ENCODE measurements at regions of chr19 and their contacts with region 1.

Region 1: GRCh38 chr19:38743394-38744295 is 629 bp downstream of the CAPN12 start:
- DNase-seq: no peak
- H3K4me3 ChIP-seq: no peak overlapping the region
- H3K27ac ChIP-seq: no peak overlapping the region
- H3K4me1 ChIP-seq: no peaks in the 10 kb centered on the region
- H3K27me3 ChIP-seq: no peaks in the 10 kb centered on the region
- CTCF ChIP-seq: no peak

Region 2: GRCh38 chr19:38718747-38719543 is 24.7 kb before region 1 on chr19:
- CTCF ChIA-PET with region 1: no interaction called
- POLR2A ChIA-PET with region 1: no interaction called
- intact Hi-C with region 1: no loop called
- DNase-seq: peak; percentile 56 to 93
- H3K4me3 ChIP-seq: no peak overlapping the region
- H3K27ac ChIP-seq: peak overlapping the region; percentile 80
- H3K4me1 ChIP-seq: peaks cover 11% of the 10 kb centered on the region
- H3K27me3 ChIP-seq: no peaks in the 10 kb centered on the region
- CTCF ChIP-seq: no peak; the same call in 1 of the 2 replicates

Region 3: DNA sequence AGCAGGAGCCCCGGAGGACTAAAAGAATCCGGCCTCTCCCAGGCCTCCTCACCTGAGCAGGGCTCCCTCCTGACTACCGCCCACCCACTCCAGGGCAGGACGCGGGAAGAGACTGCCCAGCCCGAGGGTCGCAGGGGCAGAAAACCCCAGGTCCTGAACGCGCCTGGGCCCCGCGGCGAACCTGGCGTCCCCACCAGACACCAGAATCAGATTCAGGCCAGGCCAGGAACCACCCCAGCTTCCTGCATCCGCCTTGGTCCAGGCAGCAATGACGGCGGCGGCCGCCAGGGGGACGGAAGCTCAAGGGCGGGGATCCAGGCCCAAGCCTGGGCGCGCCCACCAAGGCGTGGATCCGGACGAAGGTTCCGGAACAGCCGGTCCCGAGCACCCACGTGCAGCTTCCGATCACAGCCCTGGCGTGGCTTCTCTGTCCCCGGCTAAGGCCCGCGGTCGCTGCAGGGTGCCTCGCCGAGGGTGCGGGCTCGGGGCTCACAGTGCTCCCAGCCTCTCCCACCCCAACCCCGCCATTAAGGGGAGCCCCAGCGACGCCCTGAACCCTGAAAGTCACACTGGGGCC is 26.1 kb after region 1 on chr19:
- CTCF ChIA-PET with region 1: interaction called, 13 read pairs
- POLR2A ChIA-PET with region 1: no interaction called
- intact Hi-C with region 1: no loop called
- DNase-seq: peak in 1 of 2 experiments; percentile 69
- H3K4me3 ChIP-seq: no peak overlapping the region
- H3K27ac ChIP-seq: no peak overlapping the region
- H3K4me1 ChIP-seq: no peaks in the 10 kb centered on the region
- H3K27me3 ChIP-seq: no peaks in the 10 kb centered on the region
- CTCF ChIP-seq: peak; percentile 80

Region 4: GRCh38 chr19:38793203-38793602 is 49.6 kb after region 1 on chr19:
- CTCF ChIA-PET with region 1: no interaction called
- POLR2A ChIA-PET with region 1: interaction called, 10 read pairs
- intact Hi-C with region 1: no loop called
- DNase-seq: peak; percentile 41 to 48
- H3K4me3 ChIP-seq: no peak overlapping the region
- H3K27ac ChIP-seq: peak overlapping the region; percentile 38; the same call in 1 of the 2 replicates
- H3K4me1 ChIP-seq: peaks cover 12% of the 10 kb centered on the region; the same call in 1 of the 2 replicates
- H3K27me3 ChIP-seq: no peaks in the 10 kb centered on the region
- CTCF ChIP-seq: no peak

Measured in PC-9 (cell line).